Right lobe of liver (tissue), 6 donors: ENCODE measurements at regions of chr20 and their contacts with region 1.

Region 1: GRCh38 chr20:40990542-40991120 is 38.0 kb upstream of the TOP1 start:
- DNase-seq: peak; percentile 75 to 79 (median 77)
- ATAC-seq: peak; percentile 98 to 99 (median 99)
- H3K4me3 ChIP-seq: no peak overlapping the region
- H3K27ac ChIP-seq: no peak overlapping the region
- H3K4me1 ChIP-seq: no peaks in the 10 kb centered on the region
- H3K27me3 ChIP-seq: no peaks in the 10 kb centered on the region
- CTCF ChIP-seq: peak; percentile 79 to 86 (median 84)
- POLR2A ChIP-seq: no peak

Region 2: DNA sequence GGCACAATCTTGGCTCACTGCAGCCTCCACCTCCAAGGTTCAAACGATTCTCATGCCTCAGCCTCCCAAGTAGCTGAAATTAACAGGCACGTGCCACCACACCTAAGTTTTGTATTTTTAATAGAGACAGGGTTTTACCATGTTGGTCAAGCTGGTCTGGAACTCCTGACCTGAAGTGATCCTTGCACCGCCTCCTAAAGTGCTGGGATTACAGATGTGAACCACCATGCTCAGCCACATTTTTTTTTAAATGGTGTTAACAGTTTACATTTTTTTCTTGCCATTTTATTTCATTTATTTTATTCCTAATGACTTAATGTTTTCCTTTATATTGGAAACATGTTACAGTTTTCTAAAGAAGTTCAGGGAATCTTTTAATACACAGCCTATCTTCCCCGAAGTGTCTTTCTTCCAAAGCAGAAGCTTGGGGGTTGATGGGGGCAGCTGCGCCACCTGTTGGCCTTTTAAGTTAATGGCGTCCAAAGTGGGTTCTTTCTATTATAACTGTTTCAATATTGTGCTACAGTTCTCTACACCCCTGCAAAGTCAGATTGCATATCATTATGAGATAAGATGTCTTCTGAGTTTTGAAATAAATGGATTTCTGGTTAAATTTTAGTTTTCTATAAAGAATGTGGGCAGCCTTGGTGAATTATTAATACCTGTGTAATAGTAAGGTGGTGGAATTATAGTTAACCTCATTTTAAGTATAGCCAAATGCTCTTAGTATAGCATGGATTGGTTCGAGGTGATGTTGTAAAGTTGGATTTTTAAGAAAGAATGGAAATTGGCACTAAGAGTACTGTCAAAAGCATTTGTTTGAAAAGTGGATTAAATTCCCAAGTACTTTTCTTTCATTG is 104.7 kb after region 1 on chr20:
- intact Hi-C with region 1: loop called (anchors 5 to 10 kb)
- DNase-seq: peak in 1 of 3 donors; percentile 30
- ATAC-seq: peak; percentile 77 to 86 (median 84)
- H3K4me3 ChIP-seq: no peak overlapping the region
- H3K27ac ChIP-seq: no peak overlapping the region
- H3K4me1 ChIP-seq: peaks cover 0 to 22% (median 8%) of the 10 kb centered on the region in 4 donors
- H3K27me3 ChIP-seq: no peaks in the 10 kb centered on the region
- CTCF ChIP-seq: peak; percentile 76 to 90 (median 83)
- POLR2A ChIP-seq: no peak

Region 3: DNA sequence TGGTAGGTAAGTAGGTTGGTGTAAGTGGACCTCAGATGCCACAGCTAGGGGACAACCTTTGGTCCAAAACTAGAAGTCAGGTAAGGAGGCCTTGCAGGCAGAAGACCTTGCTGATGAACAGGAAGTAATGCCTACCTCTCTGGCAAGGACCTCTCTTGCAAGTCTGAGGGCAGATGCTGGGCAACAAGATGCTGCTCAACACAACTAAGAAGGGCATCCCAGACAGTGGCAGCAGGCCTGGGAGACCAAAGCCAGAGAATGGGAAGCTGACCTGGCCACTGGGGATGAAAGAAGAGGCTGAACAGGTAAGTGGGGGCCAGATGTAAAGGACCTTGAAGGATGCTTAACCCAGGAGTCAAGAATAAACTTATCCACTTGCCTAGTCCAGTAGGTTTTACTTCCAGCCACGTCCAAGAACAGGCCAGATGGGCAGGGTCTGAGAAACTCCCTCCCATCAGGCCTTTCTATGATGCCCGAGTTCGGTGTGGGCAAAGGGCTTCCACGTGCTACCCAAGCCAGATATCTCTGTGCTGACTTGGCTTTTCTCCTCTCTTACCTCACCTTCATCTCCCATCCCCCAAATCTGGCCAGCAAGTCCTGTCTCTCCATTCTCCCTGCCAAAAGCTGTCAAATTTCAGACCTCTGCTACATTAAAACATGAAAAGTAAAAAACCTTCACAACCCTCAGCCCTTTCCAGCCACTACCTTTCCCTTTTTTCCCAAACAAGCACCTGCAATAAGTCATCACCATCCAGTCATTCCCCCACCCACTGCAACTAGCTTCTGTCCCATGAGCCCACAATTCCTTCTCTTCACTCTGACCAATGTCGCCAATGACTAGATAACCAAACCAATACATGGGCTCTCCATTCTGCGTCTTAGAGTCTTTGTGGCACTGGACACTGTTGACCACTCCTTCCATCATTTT is 135.2 kb after region 1 on chr20:
- intact Hi-C with region 1: no loop called
- DNase-seq: peak in 2 of 3 donors; percentile 82 to 85
- ATAC-seq: peak; percentile 73 to 98 (median 90)
- H3K4me3 ChIP-seq: no peak overlapping the region
- H3K27ac ChIP-seq: peak overlapping the region in 1 of 3 donors; percentile 22
- H3K4me1 ChIP-seq: peaks cover 0 to 11% (median 0%) of the 10 kb centered on the region in 4 donors
- H3K27me3 ChIP-seq: no peaks in the 10 kb centered on the region
- CTCF ChIP-seq: no peak
- POLR2A ChIP-seq: no peak